ENCODE measurements at regions of chr15 and their contacts with region 1.

Region 1: DNA sequence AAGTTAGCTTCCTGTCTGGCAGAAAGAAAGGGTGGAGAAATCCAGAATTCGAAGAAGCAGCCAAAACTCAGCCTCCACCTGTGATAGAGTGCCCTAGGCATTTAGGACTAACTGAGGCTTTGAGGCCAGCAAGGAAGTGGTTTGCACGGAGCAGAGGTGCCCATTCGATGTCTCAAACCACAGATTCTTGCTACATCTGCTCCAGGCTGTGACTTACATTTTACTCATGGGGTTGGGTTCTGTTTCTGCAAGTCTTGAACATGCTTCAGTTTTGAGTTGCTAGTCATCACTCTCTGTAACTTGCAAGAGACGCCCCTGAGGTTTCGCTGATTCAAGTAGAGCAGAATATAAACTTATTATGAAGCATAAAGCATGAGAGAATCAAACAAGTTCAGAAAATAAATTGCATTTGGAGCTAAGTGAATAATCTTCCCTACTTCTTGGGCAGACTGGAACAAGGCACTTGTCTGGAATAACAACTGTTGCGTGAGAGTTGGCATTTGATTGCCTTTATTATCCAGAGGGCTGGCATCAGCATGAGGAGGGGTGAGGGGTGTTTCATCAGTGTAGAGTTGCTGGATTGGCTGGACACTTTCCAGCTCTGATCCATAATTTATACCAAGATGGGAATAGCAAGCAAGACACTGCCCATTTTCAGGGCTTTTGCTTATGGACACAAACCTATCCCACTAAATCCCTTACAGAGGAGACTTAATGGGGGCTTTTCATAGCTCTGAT is 256.5 kb downstream of the AGBL1 start:
- DNase-seq: peak; percentile 97
- H3K4me3 Mint-ChIP-seq: peak overlapping the region; percentile 30
- H3K27ac Mint-ChIP-seq: peak overlapping the region; percentile 81
- H3K4me1 Mint-ChIP-seq: peaks cover 49% of the 10 kb centered on the region
- H3K27me3 Mint-ChIP-seq: no peaks in the 10 kb centered on the region
- CTCF ChIP-seq: no peak

Region 2: DNA sequence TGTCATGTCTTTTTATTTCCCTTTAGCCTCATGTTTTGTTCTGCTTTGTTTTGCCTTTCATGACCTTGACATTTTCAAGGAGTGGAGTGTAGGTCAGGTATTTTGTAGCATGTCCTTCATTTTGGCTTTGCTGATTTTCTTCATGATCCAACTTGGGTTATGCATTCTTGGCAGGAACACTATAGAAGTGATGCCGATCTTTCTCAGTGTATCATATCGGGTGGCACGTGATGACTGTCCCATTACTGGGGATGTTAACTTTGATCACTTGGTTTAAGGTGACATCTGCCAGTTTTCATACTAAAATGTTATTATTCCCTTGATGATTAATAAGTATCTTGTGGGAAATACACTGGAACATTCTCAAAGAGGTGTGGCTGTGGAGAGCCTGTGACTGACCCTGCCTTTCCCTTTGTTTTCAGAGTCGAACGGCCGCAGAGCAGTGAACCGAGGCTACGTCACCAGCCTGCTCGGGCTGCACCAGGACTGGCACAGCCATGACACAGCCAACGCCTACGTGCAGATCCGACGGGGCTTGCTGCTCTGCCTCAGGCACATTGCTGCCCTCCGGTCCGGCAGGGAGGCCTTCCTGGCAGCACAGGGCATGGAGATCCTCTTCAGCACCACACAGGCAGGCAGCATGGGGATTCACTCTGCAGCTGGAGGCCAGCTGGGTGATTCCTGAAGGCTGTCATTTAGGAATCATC is 88.8 kb before region 1 on chr15:
- CTCF ChIA-PET with region 1: no interaction called
- POLR2A ChIA-PET with region 1: interaction called, 3 read pairs
- intact Hi-C with region 1: loop called (anchors 5 kb)
- DNase-seq: peak; percentile 55
- H3K4me3 Mint-ChIP-seq: peak overlapping the region; percentile 31
- H3K27ac Mint-ChIP-seq: peak overlapping the region; percentile 78
- H3K4me1 Mint-ChIP-seq: peaks cover 8% of the 10 kb centered on the region
- H3K27me3 Mint-ChIP-seq: no peaks in the 10 kb centered on the region
- CTCF ChIP-seq: no peak

Region 3: GRCh38 chr15:86311568-86312280 is 24.5 kb before region 1 on chr15:
- CTCF ChIA-PET with region 1: interaction called, 3 read pairs
- POLR2A ChIA-PET with region 1: interaction called, 15 read pairs
- intact Hi-C with region 1: no loop called
- DNase-seq: no peak
- H3K4me3 Mint-ChIP-seq: no peak overlapping the region
- H3K27ac Mint-ChIP-seq: no peak overlapping the region
- H3K4me1 Mint-ChIP-seq: peaks cover 10% of the 10 kb centered on the region
- H3K27me3 Mint-ChIP-seq: no peaks in the 10 kb centered on the region
- CTCF ChIP-seq: no peak

Region 4: DNA sequence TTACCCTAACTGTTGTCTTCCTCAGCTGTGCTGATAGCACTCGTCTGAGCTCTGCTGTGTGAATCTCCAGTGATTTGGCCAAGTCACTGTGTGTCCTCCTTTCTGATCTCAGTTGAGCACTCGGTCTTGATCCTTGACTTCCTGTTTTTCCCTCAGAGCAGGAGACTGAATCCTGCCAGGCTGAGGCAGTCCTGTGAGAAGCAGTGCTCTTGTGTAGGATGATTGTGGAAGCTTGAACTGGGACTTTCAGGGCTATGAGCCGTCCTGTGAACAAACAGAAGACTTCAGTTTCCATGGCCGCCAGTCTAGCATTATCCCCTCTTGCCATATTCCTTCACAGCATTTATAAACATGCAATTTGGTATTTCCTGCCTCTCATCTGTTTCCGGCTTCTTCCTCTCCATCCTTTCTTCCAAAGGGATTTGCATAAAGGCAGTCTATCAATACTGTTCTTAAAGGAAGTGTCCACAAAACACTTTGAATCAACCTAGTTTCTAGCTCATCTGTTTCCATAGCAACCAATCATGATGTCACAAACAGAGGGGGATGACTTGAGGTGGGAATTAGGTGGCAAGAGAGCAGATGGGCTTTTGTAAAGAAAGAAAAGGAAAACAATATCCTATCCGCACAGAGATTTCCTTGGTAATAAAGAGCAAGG is 19.4 kb before region 1 on chr15:
- CTCF ChIA-PET with region 1: interaction called, 3 read pairs
- POLR2A ChIA-PET with region 1: interaction called, 15 read pairs
- intact Hi-C with region 1: loop called (anchors 1 kb)
- DNase-seq: no peak
- H3K4me3 Mint-ChIP-seq: peak overlapping the region; percentile 47
- H3K27ac Mint-ChIP-seq: peak overlapping the region; percentile 91
- H3K4me1 Mint-ChIP-seq: peaks cover 15% of the 10 kb centered on the region
- H3K27me3 Mint-ChIP-seq: no peaks in the 10 kb centered on the region
- CTCF ChIP-seq: no peak

Region 5: GRCh38 chr15:86347245-86347644 is 11.0 kb after region 1 on chr15:
- CTCF ChIA-PET with region 1: interaction called, 9 read pairs
- POLR2A ChIA-PET with region 1: interaction called, 53 read pairs
- intact Hi-C with region 1: no loop called
- DNase-seq: peak; percentile 84
- H3K4me3 Mint-ChIP-seq: no peak overlapping the region
- H3K27ac Mint-ChIP-seq: no peak overlapping the region
- H3K4me1 Mint-ChIP-seq: peaks cover 18% of the 10 kb centered on the region
- H3K27me3 Mint-ChIP-seq: no peaks in the 10 kb centered on the region
- CTCF ChIP-seq: no peak

Region 6: DNA sequence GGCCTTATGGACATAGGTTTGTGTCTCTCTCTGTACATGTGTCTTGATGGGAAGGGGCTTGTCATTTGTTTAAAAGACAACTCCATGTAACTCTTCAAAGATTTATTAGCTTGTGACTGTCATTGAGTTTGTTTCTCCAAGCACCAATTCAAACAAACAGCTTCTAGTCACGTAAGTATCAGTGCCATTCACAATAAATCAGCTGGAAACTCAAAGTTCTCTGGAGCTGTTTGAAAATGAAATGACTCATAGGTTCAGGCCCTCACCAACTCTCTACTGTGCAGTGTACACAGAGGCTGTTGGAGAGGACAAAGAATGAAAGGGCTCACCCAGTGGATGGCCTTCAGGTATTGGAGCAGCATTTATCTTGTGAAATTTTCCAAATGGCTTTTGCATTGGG is 219.7 kb after region 1 on chr15:
- CTCF ChIA-PET with region 1: interaction called, 3 read pairs
- POLR2A ChIA-PET with region 1: interaction called, 21 read pairs
- intact Hi-C with region 1: loop called (anchors 10 kb)
- DNase-seq: peak; percentile 58
- H3K4me3 Mint-ChIP-seq: peak overlapping the region; percentile 33
- H3K27ac Mint-ChIP-seq: peak overlapping the region; percentile 69
- H3K4me1 Mint-ChIP-seq: peaks cover 32% of the 10 kb centered on the region
- H3K27me3 Mint-ChIP-seq: no peaks in the 10 kb centered on the region
- CTCF ChIP-seq: no peak

Measured in MCF 10A (cell line).